ENCODE measurements at regions of chr2 and their contacts with region 1.

Region 1: DNA sequence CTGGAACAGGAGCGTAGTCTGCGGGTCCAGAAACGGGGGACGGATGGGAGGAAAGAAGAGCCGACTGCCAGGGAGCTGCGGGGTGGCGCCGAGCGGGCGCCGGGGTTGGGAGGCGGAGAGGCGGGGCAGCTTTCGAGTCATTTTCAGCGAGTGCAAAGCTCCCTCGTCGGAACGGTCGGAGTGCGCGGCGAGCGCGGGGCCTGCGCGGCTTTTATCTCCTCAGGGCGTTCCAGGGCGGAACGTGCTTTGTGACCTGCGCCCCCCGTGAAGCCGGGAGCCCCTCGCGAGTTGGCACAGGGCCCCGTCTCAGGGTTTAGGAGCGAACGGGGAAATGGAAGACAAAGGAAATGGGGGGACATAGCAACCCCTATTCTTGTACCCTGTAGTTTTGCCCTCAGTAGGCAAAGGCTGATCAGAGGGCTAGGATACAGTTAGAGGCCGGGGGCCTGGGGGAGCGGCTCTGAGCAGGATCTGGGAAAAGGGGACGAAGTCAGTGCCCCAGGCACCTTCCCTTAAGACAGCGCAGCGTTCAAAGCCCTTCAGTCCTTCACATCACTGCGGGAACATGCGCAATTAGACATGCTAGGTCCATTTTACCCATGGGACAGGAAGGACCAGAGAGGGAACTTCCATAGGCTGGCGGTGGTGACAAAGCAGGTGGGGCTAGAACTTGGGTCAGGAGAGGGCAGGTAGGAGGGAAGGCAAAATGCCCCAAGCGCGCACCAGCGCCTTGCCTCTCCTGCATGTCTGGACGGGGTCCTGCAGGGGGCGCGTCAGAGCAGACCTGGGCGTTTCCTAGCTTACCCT is 60.1 kb upstream of the IL1RL1 start:
- DNase-seq: peak; percentile 85
- ATAC-seq: peak; percentile 68
- H3K4me3 Mint-ChIP-seq: peak overlapping the region; percentile 73
- H3K27ac Mint-ChIP-seq: peak overlapping the region; percentile 76
- H3K4me1 Mint-ChIP-seq: peaks cover 38% of the 10 kb centered on the region
- H3K27me3 Mint-ChIP-seq: no peaks in the 10 kb centered on the region

Region 2: GRCh38 chr2:101900375-101900774 is 350.9 kb before region 1 on chr2:
- CTCF ChIA-PET with region 1: interaction called, 4 read pairs
- POLR2A ChIA-PET with region 1: no interaction called
- intact Hi-C with region 1: loop called in 1 of 2 experiments (anchors 5 kb)
- DNase-seq: peak; percentile 82
- ATAC-seq: peak; percentile 93
- H3K4me3 Mint-ChIP-seq: peak overlapping the region; percentile 24
- H3K27ac Mint-ChIP-seq: peak overlapping the region; percentile 90
- H3K4me1 Mint-ChIP-seq: peaks cover 38% of the 10 kb centered on the region
- H3K27me3 Mint-ChIP-seq: peaks cover 10% of the 10 kb centered on the region

Region 3: DNA sequence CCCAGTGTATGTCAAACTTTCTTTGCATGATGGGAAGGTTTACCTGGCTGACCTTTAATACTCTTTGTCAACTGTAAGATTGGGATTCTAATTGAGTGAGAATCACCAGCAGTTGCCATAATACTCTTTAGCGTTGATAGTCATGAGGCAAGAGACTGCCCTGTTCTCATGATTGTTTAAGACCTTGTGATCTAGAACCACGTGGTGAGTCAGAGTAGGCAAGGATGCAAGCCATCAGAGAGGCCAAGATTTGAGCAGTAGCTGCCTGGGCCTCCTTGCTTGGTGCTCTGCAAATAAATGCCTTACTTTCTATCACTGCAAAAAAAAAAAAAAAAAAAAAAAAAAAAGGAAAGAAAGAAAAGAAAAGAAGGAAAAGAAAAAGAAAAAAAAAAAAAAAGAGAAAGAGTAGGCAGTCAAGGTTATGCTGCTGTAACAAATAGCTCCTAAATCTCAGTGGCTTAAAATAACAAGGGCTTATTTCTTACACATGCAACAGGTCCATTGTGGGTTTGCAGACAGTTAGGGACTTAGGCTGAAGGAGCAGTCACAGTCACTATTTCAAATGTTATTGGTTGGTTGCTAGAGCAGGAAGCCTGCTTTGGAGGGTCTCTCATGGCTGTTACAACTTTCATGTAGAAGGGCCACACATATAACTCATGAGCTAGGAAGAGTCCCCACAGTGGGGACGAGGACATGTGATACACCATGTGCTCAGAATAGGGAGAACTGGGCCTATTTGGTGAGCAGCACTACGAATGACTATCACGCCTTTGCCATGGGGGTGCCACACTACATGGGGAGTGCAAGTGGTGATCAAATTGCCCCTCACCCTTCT is 237.8 kb before region 1 on chr2:
- CTCF ChIA-PET with region 1: interaction called, 11 read pairs
- POLR2A ChIA-PET with region 1: no interaction called
- intact Hi-C with region 1: no loop called
- DNase-seq: peak; percentile 39
- ATAC-seq: peak; percentile 45
- H3K4me3 Mint-ChIP-seq: no peak overlapping the region
- H3K27ac Mint-ChIP-seq: peak overlapping the region; percentile 83
- H3K4me1 Mint-ChIP-seq: peaks cover 49% of the 10 kb centered on the region
- H3K27me3 Mint-ChIP-seq: no peaks in the 10 kb centered on the region